ENCODE measurements at regions of chr10 and their contacts with region 1.

Region 1: GRCh38 chr10:58291538-58292174 is 22.7 kb downstream of the CISD1 start:
- DNase-seq: no peak
- H3K4me3 ChIP-seq: no peak overlapping the region
- H3K27ac ChIP-seq: no peak overlapping the region
- H3K4me1 ChIP-seq: no peaks in the 10 kb centered on the region
- H3K27me3 ChIP-seq: no peaks in the 10 kb centered on the region
- CTCF ChIP-seq: peak; percentile 65

Region 2: DNA sequence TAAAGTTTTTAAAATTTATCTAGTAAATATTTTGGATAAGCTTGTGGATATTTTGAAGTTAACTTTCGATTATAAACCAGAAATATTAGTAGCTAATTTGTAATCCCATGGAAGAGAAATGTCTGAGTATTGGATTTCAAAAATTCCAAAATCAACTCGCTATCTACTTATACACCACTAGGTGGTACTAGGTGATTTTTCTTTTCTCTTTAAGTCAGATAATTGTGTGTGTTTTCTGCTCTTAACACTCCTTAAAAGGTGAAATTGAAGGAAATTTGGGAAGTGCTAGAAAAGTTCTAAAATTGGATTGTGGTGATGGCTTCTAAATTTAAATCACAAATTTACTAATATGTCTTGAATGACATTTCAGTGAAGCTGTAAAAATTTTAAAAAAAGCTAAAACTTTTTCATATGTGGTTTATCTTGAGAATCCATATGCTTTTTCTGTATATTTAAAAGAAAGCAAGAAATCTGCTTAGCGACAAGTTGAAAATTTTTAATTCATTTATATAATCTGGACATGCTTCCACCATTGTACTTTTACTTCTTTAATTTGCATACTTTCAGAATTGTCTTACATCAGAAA is 114.2 kb before region 1 on chr10:
- intact Hi-C with region 1: loop called (anchors 2 kb)
- DNase-seq: no peak
- H3K4me3 ChIP-seq: no peak overlapping the region
- H3K27ac ChIP-seq: no peak overlapping the region
- H3K4me1 ChIP-seq: no peaks in the 10 kb centered on the region
- H3K27me3 ChIP-seq: no peaks in the 10 kb centered on the region
- CTCF ChIP-seq: peak; percentile 53

Measured in colonic mucosa (tissue), 4 donors.